Ovary (tissue), 10 donors: ENCODE measurements at regions of chr12 and their contacts with region 1.

Region 1: GRCh38 chr12:109110988-109111495 is 5.3 kb upstream of the ACACB start:
- DNase-seq: peak; percentile 92 to 97 (median 95)
- H3K4me3 ChIP-seq: peak overlapping the region; percentile 74
- H3K27ac ChIP-seq: peak overlapping the region; percentile 63 to 82
- H3K4me1 ChIP-seq: peaks cover 17% of the 10 kb centered on the region
- H3K27me3 ChIP-seq: no peaks in the 10 kb centered on the region
- CTCF ChIP-seq: no peak
- EP300 ChIP-seq: peak; percentile 90
- POLR2A ChIP-seq: peak; percentile 55

Region 2: DNA sequence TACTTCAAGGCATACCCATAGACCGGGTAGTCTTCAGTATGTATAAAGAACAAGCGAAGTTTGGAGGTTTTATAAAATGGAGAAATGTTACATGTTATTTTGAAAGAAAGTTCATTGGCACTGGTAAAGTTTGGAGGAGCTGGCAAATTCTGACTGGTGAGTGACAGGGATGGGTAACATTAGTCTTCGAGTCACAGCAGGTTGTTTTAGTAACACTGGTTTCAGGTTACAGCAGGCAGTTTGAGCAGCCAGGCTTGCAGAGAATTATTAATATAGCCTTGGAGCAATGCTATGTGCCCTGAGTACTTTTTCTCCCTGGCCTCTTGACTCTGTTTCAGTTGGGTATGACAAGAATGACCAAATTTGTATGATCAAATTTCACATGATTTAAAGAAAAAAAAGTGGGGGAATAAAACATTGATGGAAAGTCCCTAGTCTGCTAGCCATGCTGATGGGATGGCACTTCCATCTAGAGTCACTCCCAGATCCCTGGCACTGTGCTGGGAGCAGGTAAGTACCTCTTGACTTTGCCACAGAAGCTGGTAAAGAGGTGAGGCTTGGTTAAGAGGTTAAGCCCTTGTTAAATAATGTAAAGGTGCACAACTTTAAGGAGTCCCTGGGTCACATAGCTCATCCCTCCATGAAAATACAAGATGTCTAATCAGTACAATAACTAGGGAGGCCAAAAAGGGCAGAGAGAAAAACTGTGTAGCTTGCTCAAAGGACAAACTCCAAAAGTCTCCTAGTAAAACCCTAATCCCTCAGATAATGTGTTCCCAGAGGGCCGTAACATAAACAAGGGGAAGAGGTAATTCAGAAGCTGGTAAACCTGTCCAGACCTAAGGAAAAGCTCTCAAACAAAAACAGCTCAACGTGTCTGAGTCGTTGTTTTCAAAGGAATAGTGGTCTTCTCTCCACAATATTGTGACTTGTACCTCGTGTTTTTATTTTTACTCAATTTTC is 77.5 kb before region 1 on chr12:
- intact Hi-C with region 1: no loop called
- DNase-seq: no peak
- H3K4me3 ChIP-seq: no peak overlapping the region
- H3K27ac ChIP-seq: no peak overlapping the region
- H3K4me1 ChIP-seq: no peaks in the 10 kb centered on the region
- H3K27me3 ChIP-seq: no peaks in the 10 kb centered on the region
- CTCF ChIP-seq: no peak
- EP300 ChIP-seq: no peak
- POLR2A ChIP-seq: no peak

Region 3: GRCh38 chr12:109154451-109155438 is 43.7 kb after region 1 on chr12:
- intact Hi-C with region 1: loop called in 2 of 4 experiments (anchors 2 to 5 kb)
- DNase-seq: peak; percentile 83 to 91 (median 88)
- H3K4me3 ChIP-seq: peak overlapping the region; percentile 52
- H3K27ac ChIP-seq: peak overlapping the region; percentile 46 to 70
- H3K4me1 ChIP-seq: peaks cover 23% of the 10 kb centered on the region
- H3K27me3 ChIP-seq: no peaks in the 10 kb centered on the region
- CTCF ChIP-seq: no peak
- EP300 ChIP-seq: no peak
- POLR2A ChIP-seq: peak; percentile 31

Region 4: GRCh38 chr12:109385339-109386067 is 274.5 kb after region 1 on chr12:
- intact Hi-C with region 1: loop called in 1 of 4 experiments (anchors 10 kb)
- DNase-seq: peak in 3 of 5 donors; percentile 19 to 54 (median 26)
- H3K4me3 ChIP-seq: no peak overlapping the region
- H3K27ac ChIP-seq: no peak overlapping the region
- H3K4me1 ChIP-seq: peaks cover 3% of the 10 kb centered on the region
- H3K27me3 ChIP-seq: no peaks in the 10 kb centered on the region
- CTCF ChIP-seq: peak in 2 of 3 donors; percentile 55 to 62
- EP300 ChIP-seq: no peak
- POLR2A ChIP-seq: no peak